B cell (primary cell): ENCODE measurements at regions of chr5 and their contacts with region 1.

Region 1: DNA sequence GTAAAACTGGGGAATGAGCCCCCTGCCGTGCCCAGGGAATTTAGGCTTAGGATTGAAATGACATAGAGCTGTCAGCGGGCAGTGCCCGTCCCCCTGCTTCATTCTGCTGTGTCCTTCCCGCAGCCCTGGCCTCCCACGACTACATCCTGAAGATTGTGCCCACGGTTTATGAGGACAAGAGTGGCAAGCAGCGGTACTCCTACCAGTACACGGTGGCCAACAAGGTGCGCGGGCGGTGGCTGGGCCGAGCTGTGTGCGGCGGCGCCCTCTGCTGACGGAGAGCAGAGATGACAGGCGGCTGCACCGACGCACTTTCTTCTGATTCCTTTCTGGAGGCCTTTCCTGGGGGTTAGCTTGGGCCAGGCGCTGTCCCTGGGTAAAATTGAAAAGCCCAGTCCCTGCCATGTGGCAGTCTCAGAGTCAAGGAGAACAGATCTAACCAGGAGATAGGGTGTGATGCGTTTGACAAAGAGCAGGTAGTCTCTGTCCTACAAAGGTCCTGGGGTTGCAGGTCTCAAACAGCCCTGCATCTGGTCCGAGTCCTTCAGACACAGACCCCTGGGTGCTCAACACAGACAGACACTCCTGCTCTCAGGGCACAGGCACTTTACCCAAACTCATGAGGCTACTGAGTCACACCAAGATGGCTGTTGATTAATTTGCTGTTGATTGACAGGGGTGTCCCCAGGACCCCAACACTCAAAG is 26.8 kb upstream of the RPL26L1 start:
- DNase-seq: peak; percentile 80
- ATAC-seq: peak; percentile 95
- H3K4me3 ChIP-seq: no peak overlapping the region
- H3K4me3 Mint-ChIP-seq: no peak overlapping the region
- H3K27ac ChIP-seq: no peak overlapping the region
- H3K27ac Mint-ChIP-seq: peak overlapping the region; percentile 78
- H3K4me1 ChIP-seq: peaks cover 0 to 6% of the 10 kb centered on the region in 2 donors
- H3K4me1 Mint-ChIP-seq: peaks cover 16% of the 10 kb centered on the region
- H3K27me3 ChIP-seq: no peaks in the 10 kb centered on the region
- H3K27me3 Mint-ChIP-seq: no peaks in the 10 kb centered on the region
- CTCF ChIP-seq: peak; percentile 96

Region 2: DNA sequence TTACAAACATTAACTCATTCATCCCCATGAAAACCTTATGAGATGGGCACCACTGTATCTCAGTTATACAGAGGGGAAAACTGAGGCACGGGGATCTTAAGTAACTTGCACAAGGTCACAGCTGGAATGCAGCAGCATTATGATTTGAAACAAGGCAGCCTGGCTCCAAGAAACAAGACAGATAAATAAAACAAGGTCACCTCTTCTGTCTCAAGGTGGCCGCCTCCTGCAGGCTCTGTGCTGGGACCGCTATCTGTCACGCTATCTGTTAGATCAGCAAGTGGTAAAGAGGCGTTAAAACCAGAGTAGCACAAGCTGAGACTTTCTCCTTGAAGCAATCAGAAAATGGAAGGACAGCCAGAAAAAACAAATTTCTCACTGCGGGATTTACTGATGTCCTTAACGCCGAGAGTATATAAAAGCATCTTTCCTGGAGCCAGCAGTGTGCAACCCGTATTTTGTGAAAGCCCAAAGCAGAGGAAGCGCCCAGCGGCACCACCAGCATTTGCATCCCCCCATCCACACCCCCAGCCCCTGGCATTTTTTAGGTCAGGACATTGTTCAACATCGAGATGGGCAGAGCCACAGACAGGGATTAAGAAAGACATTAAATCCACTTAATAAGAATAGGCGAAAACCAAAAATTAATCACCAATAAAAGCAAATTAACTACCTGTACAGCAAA is 210.2 kb before region 1 on chr5:
- CTCF ChIA-PET with region 1: interaction called, 70 read pairs
- POLR2A ChIA-PET with region 1: interaction called, 3 read pairs
- intact Hi-C with region 1: loop called (anchors 1 kb)
- DNase-seq: no peak
- ATAC-seq: no peak
- H3K4me3 ChIP-seq: no peak overlapping the region
- H3K4me3 Mint-ChIP-seq: no peak overlapping the region
- H3K27ac ChIP-seq: no peak overlapping the region
- H3K27ac Mint-ChIP-seq: no peak overlapping the region
- H3K4me1 ChIP-seq: no peaks in the 10 kb centered on the region
- H3K4me1 Mint-ChIP-seq: no peaks in the 10 kb centered on the region
- H3K27me3 ChIP-seq: no peaks in the 10 kb centered on the region
- H3K27me3 Mint-ChIP-seq: no peaks in the 10 kb centered on the region
- CTCF ChIP-seq: no peak

Region 3: GRCh38 chr5:172789687-172790495 is 142.6 kb before region 1 on chr5:
- CTCF ChIA-PET with region 1: no interaction called
- POLR2A ChIA-PET with region 1: no interaction called
- intact Hi-C with region 1: no loop called
- DNase-seq: no peak
- ATAC-seq: no peak
- H3K4me3 ChIP-seq: no peak overlapping the region
- H3K4me3 Mint-ChIP-seq: no peak overlapping the region
- H3K27ac ChIP-seq: no peak overlapping the region
- H3K27ac Mint-ChIP-seq: no peak overlapping the region
- H3K4me1 ChIP-seq: peaks cover 0 to 13% of the 10 kb centered on the region in 2 donors
- H3K4me1 Mint-ChIP-seq: peaks cover 7% of the 10 kb centered on the region
- H3K27me3 ChIP-seq: no peaks in the 10 kb centered on the region
- H3K27me3 Mint-ChIP-seq: no peaks in the 10 kb centered on the region
- CTCF ChIP-seq: no peak

Region 4: GRCh38 chr5:172833686-172834414 is 98.6 kb before region 1 on chr5 and contains the start of gene ERGIC1:
- CTCF ChIA-PET with region 1: interaction called, 4 read pairs
- POLR2A ChIA-PET with region 1: interaction called, 3 read pairs
- intact Hi-C with region 1: loop called (anchors 5 kb)
- DNase-seq: peak; percentile 86
- ATAC-seq: peak; percentile 74
- H3K4me3 ChIP-seq: peak within 1 kb of the TSS; percentile 62 to 90 (median 69)
- H3K4me3 Mint-ChIP-seq: peak within 1 kb of the TSS; percentile 90
- H3K27ac ChIP-seq: peak within 1 kb of the TSS; percentile 95 to 98
- H3K27ac Mint-ChIP-seq: peak within 1 kb of the TSS; percentile 96
- H3K4me1 ChIP-seq: peaks cover 42 to 52% of the 10 kb centered on the region in 2 donors
- H3K4me1 Mint-ChIP-seq: peaks cover 48% of the 10 kb centered on the region
- H3K27me3 ChIP-seq: no peaks in the 10 kb centered on the region
- H3K27me3 Mint-ChIP-seq: no peaks in the 10 kb centered on the region
- CTCF ChIP-seq: no peak
- total RNA-seq, gene ERGIC1: 132 and 140 TPM in 2 replicates

Region 5: GRCh38 chr5:172902497-172903200 is 29.8 kb before region 1 on chr5:
- CTCF ChIA-PET with region 1: interaction called, 12 read pairs
- POLR2A ChIA-PET with region 1: no interaction called
- intact Hi-C with region 1: no loop called
- DNase-seq: no peak
- ATAC-seq: no peak
- H3K4me3 ChIP-seq: no peak overlapping the region
- H3K4me3 Mint-ChIP-seq: no peak overlapping the region
- H3K27ac ChIP-seq: no peak overlapping the region
- H3K27ac Mint-ChIP-seq: no peak overlapping the region
- H3K4me1 ChIP-seq: no peaks in the 10 kb centered on the region
- H3K4me1 Mint-ChIP-seq: no peaks in the 10 kb centered on the region
- H3K27me3 ChIP-seq: no peaks in the 10 kb centered on the region
- H3K27me3 Mint-ChIP-seq: no peaks in the 10 kb centered on the region
- CTCF ChIP-seq: no peak

Region 6: DNA sequence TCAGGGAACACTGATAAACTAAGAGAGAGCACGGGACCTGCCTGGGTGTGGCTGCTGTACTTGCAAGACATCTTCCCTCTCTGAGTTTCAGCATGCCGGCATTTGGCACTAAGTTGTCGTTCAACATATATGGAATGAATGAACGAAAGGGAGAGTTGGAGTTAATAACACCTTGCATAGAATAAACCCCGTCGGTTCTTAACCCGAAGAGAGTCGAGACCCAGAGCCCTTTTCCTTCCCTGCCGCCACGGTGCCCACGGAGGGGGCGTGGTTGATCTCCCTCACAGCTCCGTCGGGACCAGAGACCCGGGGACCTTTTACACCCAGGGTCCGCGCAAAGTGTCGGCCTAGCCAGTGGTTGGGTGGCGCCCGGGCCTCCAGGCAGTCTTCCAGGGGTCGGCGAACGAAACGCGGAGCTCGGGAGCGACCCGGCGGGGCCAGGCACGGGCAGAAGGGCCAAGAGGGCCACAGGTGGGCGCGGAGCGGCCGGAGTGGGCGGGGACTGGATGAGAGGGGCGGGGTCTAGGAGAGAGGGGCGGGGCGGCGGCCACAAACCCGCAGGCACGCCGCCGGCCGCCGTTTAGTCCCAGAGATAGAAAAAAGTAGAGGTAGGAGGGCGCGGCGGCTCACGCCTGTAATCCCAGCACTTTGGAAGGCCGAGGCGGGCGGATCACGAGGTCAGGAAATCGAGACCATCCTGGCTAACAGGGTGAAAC is 26.0 kb after region 1 on chr5:
- CTCF ChIA-PET with region 1: interaction called, 9 read pairs
- POLR2A ChIA-PET with region 1: no interaction called
- intact Hi-C with region 1: loop called (anchors 1 kb)
- DNase-seq: peak; percentile 82
- ATAC-seq: peak; percentile 73
- H3K4me3 ChIP-seq: peak overlapping the region; percentile 44 to 97 (median 85)
- H3K4me3 Mint-ChIP-seq: peak overlapping the region; percentile 97
- H3K27ac ChIP-seq: peak overlapping the region; percentile 54 to 81
- H3K27ac Mint-ChIP-seq: peak overlapping the region; percentile 96
- H3K4me1 ChIP-seq: peaks cover 8 to 18% of the 10 kb centered on the region in 2 donors
- H3K4me1 Mint-ChIP-seq: peaks cover 23% of the 10 kb centered on the region
- H3K27me3 ChIP-seq: no peaks in the 10 kb centered on the region
- H3K27me3 Mint-ChIP-seq: no peaks in the 10 kb centered on the region
- CTCF ChIP-seq: no peak